GM23248 (cell line): ENCODE measurements at regions of chrX and their contacts with region 1.

Region 1: DNA sequence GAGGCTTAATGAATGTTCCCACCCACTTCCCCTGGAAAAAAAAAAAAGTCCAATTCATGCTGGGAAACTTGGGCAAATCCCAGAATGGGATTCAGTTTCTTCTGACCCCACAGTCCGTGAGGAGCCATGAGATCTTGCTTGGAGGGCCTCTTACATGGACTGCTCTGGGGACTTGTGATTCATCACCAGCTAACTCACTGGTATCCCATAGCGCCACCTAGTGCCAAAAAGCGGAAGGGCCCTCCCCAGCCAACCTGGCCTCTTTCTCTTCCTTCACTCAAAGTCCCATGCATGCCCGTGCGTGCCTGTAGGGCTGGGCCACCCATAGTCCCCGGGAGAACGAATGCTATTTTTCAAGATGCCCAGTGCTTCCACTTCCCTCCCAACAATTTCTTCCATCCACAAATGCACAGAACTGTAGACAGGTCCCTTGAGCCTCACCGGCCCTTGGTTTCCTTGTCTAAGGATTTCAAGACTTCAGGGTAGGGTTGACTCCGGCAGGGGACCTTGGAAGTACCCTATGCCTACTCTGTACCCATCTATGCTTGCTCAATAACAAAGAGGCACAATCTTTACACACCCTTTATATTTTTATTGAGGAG is 5.1 kb downstream of the RTL5 start:
- DNase-seq: peak; percentile 84
- H3K4me3 ChIP-seq: no peak overlapping the region
- H3K27ac ChIP-seq: no peak overlapping the region
- H3K4me1 ChIP-seq: peaks cover 10% of the 10 kb centered on the region
- H3K27me3 ChIP-seq: no peaks in the 10 kb centered on the region

Region 2: GRCh38 chrX:71809886-71810285 is 316.8 kb before region 1 on chrX:
- in situ Hi-C with region 1: no loop called
- DNase-seq: peak; percentile 2
- H3K4me3 ChIP-seq: no peak overlapping the region
- H3K27ac ChIP-seq: no peak overlapping the region
- H3K4me1 ChIP-seq: no peaks in the 10 kb centered on the region
- H3K27me3 ChIP-seq: no peaks in the 10 kb centered on the region

Region 3: DNA sequence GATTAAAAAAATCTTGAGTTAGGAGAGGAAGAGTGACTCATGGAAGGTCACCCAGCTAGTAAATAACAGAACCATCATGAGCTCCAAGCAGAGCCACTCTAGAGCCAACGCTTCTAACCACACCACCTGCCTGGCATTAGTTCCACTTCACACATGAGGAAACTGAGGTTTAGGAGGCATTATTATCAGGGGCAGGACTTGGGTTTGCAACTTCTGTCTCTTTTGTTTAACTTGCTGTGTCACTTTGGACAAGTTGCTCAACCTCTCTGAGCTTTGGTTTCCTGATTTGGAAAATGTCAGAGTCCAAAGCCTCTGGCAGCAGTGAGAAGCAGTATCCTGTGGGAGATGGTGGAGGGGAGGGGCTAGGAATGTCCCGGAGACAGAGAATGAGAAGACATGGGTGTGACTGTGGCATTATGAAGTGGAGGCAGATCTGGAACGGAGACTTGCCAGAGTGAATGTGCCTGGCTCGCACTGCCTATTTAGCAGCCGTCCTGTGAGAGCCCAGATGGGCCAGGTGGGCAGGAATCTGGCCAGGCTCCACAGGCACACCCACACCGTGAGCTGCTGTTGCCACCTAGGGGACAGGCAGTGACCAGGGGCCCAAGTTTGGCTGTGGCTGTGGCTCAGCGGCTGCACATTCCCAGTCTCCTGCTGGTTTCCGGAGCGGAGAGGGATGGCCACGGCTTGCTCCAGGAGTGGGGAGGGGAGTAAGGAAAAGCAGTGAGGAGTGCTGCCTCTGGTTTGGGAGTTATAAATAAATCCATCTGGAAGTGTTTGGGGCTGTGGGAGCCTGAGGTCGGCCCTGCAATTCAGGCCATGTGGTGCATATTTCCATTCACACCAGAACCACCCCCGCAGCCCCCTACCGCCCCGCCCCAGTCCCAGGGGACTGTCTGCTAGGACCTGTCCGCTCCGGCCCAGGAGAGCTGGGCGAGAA is 122.6 kb before region 1 on chrX:
- in situ Hi-C with region 1: loop called (anchors 10 kb)
- DNase-seq: peak; percentile 44
- H3K4me3 ChIP-seq: peak overlapping the region; percentile 33; the same call in 1 of the 2 replicates
- H3K27ac ChIP-seq: no peak overlapping the region
- H3K4me1 ChIP-seq: peaks cover 17% of the 10 kb centered on the region
- H3K27me3 ChIP-seq: no peaks in the 10 kb centered on the region